Activated CD4-positive, alpha-beta T cell treated with anti-CD3 and anti-CD28 coated beads for 36 hours (primary cell): ENCODE measurements at regions of chr10 and their contacts with region 1.

Region 1: DNA sequence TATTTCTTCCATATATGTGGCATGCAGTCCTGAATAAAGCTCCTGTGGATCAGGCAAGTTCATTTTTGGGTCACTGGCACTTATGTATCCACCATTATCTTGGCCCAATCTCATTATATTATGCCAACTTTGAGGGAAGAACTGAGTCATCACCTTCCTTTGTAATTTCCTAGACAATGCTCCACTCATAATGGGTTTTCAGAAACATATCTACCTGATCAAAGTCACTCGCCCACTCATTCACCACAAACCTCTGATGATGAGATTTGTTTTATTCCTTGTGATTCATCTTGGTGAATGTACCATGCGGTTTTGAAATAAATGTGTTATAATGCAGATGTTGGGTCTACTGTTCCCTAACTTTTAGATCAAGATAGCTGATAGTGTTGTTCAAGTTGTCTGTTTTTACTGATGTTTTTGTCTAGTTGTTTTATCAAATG is 525.8 kb downstream of the KIF20B start:
- DNase-seq: peak; percentile 79
- ATAC-seq: peak; percentile 94
- H3K4me3 Mint-ChIP-seq: no peak overlapping the region
- H3K27ac Mint-ChIP-seq: no peak overlapping the region
- H3K4me1 Mint-ChIP-seq: peaks cover 20% of the 10 kb centered on the region
- H3K27me3 Mint-ChIP-seq: peaks cover 35% of the 10 kb centered on the region

Region 2: GRCh38 chr10:90087197-90088007 is 139.8 kb before region 1 on chr10:
- CTCF ChIA-PET with region 1: no interaction called
- POLR2A ChIA-PET with region 1: no interaction called
- intact Hi-C with region 1: loop called (anchors 1 to 5 kb)
- DNase-seq: peak; percentile 36
- ATAC-seq: peak; percentile 96
- H3K4me3 Mint-ChIP-seq: no peak overlapping the region
- H3K27ac Mint-ChIP-seq: no peak overlapping the region
- H3K4me1 Mint-ChIP-seq: peaks cover 8% of the 10 kb centered on the region
- H3K27me3 Mint-ChIP-seq: peaks cover 2% of the 10 kb centered on the region

Region 3: GRCh38 chr10:90319188-90319914 is 92.1 kb after region 1 on chr10:
- CTCF ChIA-PET with region 1: no interaction called
- POLR2A ChIA-PET with region 1: no interaction called
- intact Hi-C with region 1: loop called (anchors 5 to 10 kb)
- DNase-seq: peak; percentile 30
- ATAC-seq: peak; percentile 97
- H3K4me3 Mint-ChIP-seq: no peak overlapping the region
- H3K27ac Mint-ChIP-seq: no peak overlapping the region
- H3K4me1 Mint-ChIP-seq: peaks cover 8% of the 10 kb centered on the region
- H3K27me3 Mint-ChIP-seq: peaks cover 15% of the 10 kb centered on the region

Region 4: GRCh38 chr10:90571481-90572258 is 344.4 kb after region 1 on chr10:
- CTCF ChIA-PET with region 1: no interaction called
- POLR2A ChIA-PET with region 1: no interaction called
- intact Hi-C with region 1: no loop called
- DNase-seq: no peak
- ATAC-seq: no peak
- H3K4me3 Mint-ChIP-seq: no peak overlapping the region
- H3K27ac Mint-ChIP-seq: no peak overlapping the region
- H3K4me1 Mint-ChIP-seq: no peaks in the 10 kb centered on the region
- H3K27me3 Mint-ChIP-seq: no peaks in the 10 kb centered on the region